ENCODE measurements at regions of chrX and their contacts with region 1.

Region 1: DNA sequence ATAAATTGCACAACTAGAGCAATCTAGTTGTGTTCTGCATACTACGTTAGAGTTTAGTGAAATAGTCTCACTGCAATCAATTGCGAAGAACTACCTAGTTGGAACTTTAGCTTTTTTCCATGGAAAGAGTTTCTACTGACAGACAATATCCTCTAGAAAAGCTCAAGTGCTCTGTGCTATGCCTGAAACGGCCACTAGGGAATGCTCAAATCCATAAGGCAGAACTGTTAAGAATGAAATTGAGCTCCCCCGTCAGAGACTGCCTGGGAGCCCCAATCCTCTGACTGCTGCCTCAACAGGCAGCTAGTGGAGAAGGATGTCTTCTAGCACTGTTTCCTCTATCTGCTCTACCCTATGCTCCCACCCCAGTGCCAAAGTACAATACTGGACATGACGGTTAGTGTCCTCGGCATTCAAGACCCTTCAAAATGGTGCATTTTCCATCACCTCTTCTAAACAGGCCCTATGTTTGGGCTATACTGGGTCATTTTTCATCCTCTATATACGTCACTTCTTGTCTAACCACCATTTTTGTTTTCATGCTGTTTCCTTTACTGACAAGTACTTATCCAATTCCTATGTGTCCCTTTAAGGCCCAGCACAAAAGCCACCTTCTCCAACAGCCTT is 35.3 kb downstream of the FRMD7 start:
- DNase-seq: peak; percentile 7 to 74 (median 30)
- ATAC-seq: peak; percentile 79
- H3K4me3 ChIP-seq: no peak overlapping the region
- H3K4me3 Mint-ChIP-seq: no peak overlapping the region
- H3K27ac ChIP-seq: no peak overlapping the region
- H3K27ac Mint-ChIP-seq: no peak overlapping the region
- H3K4me1 ChIP-seq: no peaks in the 10 kb centered on the region
- H3K4me1 Mint-ChIP-seq: no peaks in the 10 kb centered on the region
- H3K27me3 ChIP-seq: no peaks in the 10 kb centered on the region
- H3K27me3 Mint-ChIP-seq: no peaks in the 10 kb centered on the region
- CTCF ChIP-seq: peak; percentile 70

Region 2: GRCh38 chrX:132622130-132622529 is 529.6 kb after region 1 on chrX:
- CTCF ChIA-PET with region 1: no interaction called
- POLR2A ChIA-PET with region 1: no interaction called
- intact Hi-C with region 1: loop called in 1 of 2 experiments (anchors 5 kb)
- DNase-seq: peak in 1 of 14 experiments; percentile 16
- ATAC-seq: no peak
- H3K4me3 ChIP-seq: no peak overlapping the region
- H3K4me3 Mint-ChIP-seq: no peak overlapping the region
- H3K27ac ChIP-seq: no peak overlapping the region
- H3K27ac Mint-ChIP-seq: no peak overlapping the region
- H3K4me1 ChIP-seq: no peaks in the 10 kb centered on the region
- H3K4me1 Mint-ChIP-seq: no peaks in the 10 kb centered on the region
- H3K27me3 ChIP-seq: no peaks in the 10 kb centered on the region
- H3K27me3 Mint-ChIP-seq: no peaks in the 10 kb centered on the region
- CTCF ChIP-seq: no peak

Measured in CD4-positive, alpha-beta T cell (primary cell).